ENCODE measurements at regions of chr2 and their contacts with region 1.

Region 1: GRCh38 chr2:11344342-11344955 is at the start of gene ROCK2:
- DNase-seq: peak; percentile 59
- H3K4me3 Mint-ChIP-seq: peak within 1 kb of the TSS; percentile 99
- H3K27ac Mint-ChIP-seq: peak within 1 kb of the TSS; percentile 91
- H3K4me1 Mint-ChIP-seq: peaks cover 23% of the 10 kb centered on the region
- H3K27me3 Mint-ChIP-seq: peaks cover 11% of the 10 kb centered on the region
- total RNA-seq, gene ROCK2: 20.6 and 21.1 TPM in 2 replicates

Region 2: DNA sequence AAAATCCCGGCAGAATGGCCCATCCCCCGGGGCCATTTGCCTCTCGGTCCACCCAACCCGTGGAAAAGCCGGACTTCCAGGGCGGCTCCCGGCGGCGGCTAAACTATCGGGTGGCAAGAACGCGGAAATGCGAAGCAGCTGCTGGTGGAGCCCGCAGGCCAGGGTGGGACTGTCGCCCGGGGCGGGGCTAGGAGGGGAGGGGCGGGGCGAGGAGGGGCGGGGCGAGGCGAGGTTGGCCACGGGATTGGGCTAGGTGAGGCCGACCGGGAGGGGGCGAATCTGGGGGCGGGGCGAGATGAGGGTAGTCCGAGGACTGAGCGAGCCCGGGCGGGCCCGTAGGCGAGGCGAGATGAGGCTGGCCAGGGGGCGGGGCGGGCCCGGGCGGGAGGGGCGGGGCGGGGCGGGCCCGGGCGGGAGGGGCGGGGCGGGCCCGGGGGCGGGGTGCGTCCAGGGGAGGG is 189.5 kb before region 1 on chr2:
- intact Hi-C with region 1: loop called (anchors 2 kb)
- DNase-seq: peak; percentile 94
- H3K4me3 Mint-ChIP-seq: peak overlapping the region; percentile 83
- H3K27ac Mint-ChIP-seq: peak overlapping the region; percentile 75
- H3K4me1 Mint-ChIP-seq: peaks cover 9% of the 10 kb centered on the region
- H3K27me3 Mint-ChIP-seq: peaks cover 13% of the 10 kb centered on the region

Region 3: GRCh38 chr2:11254100-11254536 is 90.3 kb before region 1 on chr2:
- intact Hi-C with region 1: no loop called
- DNase-seq: no peak
- H3K4me3 Mint-ChIP-seq: no peak overlapping the region
- H3K27ac Mint-ChIP-seq: no peak overlapping the region
- H3K4me1 Mint-ChIP-seq: no peaks in the 10 kb centered on the region
- H3K27me3 Mint-ChIP-seq: no peaks in the 10 kb centered on the region

Region 4: DNA sequence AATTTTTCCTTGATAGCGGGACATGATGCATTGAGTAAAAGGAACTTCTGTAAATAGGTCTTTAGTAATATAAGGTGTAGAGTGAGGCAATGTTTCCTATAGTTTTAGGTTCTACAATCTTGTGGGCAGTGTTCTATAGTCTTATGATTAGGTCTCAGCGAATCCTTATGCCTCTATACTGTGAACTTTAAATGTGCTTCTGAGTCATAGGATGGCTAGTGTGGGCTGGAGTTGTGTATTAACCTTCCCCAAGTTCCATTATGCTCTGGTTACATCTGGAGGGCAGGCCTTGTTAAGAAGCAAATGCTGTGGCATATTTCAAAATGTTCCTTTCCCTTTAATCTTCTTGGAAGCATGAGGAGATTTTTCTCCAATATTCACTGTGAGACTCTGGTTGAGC is 73.6 kb before region 1 on chr2:
- intact Hi-C with region 1: loop called (anchors 5 kb)
- DNase-seq: no peak
- H3K4me3 Mint-ChIP-seq: no peak overlapping the region
- H3K27ac Mint-ChIP-seq: peak overlapping the region; percentile 68
- H3K4me1 Mint-ChIP-seq: peaks cover 33% of the 10 kb centered on the region
- H3K27me3 Mint-ChIP-seq: no peaks in the 10 kb centered on the region

Region 5: DNA sequence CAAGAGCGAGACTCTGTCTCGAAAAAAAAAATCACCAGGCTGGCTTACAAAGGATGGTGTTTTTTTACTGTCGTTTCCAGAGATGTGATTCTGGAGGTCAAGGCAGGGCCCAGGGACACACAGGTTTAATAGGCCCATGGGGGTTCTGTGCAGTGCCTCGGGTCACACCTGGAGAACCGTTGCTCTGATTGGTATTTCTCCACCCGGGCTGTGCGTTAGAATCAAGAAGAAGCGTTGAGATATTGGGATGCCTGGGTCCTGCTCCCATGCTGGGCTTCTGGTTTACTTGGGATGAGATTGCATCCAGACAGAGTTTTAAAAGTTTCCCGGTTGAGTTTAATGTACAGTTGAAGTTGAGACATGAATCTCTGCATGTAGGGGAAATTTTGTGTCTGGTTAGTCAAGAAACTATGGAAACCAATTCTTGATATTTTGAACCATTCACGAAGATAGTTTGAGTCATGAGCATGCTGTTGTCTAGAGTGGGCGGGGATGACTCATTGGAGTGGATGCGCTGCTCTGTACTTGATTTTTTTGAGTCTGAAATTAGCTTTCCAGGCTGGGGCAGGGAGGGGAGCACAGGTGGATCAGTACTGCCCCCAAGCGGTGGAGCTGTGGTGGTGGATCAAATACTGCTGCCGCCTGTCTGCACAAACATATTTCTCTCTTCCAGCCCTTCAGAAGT is 239.5 kb after region 1 on chr2:
- intact Hi-C with region 1: loop called (anchors 1 kb)
- DNase-seq: peak; percentile 55
- H3K4me3 Mint-ChIP-seq: no peak overlapping the region
- H3K27ac Mint-ChIP-seq: peak overlapping the region; percentile 47
- H3K4me1 Mint-ChIP-seq: peaks cover 13% of the 10 kb centered on the region
- H3K27me3 Mint-ChIP-seq: no peaks in the 10 kb centered on the region

Measured in activated T-helper 2 cell treated with anti-CD3 and anti-CD28 coated beads, Interferon-gamma antibody, Interleukin-2, Interleukin-4, amounts not matched to agents 10 μg/mL and 5 μg/mL and 100 μg/mL, durations not matched to agents 14 hours and 24 hours and 36 hours (primary cell).